AG04449 (cell line): ENCODE measurements at regions of chr19 and their contacts with region 1.

Region 1: DNA sequence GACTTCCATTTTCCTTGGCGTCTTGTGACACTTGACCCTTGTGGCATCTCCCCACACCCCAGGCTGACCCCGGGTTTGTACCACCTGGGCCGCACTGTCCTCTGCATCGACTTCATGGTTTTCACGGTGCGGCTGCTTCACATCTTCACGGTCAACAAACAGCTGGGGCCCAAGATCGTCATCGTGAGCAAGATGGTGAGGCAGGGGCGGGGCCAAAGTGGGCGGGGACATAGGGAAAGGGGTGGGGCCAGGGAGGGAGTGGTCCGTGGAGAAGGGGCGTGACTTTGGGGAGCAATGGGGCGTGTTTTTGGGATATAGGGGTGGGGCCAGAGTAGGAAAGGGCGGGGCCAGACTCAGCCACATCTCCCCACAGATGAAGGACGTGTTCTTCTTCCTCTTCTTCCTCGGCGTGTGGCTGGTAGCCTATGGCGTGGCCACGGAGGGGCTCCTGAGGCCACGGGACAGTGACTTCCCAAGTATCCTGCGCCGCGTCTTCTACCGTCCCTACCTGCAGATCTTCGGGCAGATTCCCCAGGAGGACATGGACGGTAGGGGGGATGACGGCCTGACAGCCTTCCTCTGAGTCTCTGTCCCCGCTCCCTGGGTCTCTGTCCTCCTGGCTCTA is 42.8 kb downstream of the TRPM4 start:
- DNase-seq: no peak
- H3K4me3 ChIP-seq: no peak overlapping the region
- CTCF ChIP-seq: no peak

Region 2: GRCh38 chr19:48993175-48994034 is 206.9 kb before region 1 on chr19 and contains the starts of genes GYS1 and RUVBL2:
- CTCF ChIA-PET with region 1: interaction called, 13 read pairs
- POLR2A ChIA-PET with region 1: no interaction called
- DNase-seq: peak; percentile 99
- H3K4me3 ChIP-seq: peak within 1 kb of the TSS; percentile 97
- CTCF ChIP-seq: peak; percentile 99

Region 3: GRCh38 chr19:49097455-49098288 is 102.7 kb before region 1 on chr19:
- CTCF ChIA-PET with region 1: interaction called, 95 read pairs
- POLR2A ChIA-PET with region 1: no interaction called
- DNase-seq: peak; percentile 17
- H3K4me3 ChIP-seq: no peak overlapping the region
- CTCF ChIP-seq: peak; percentile 95

Region 4: DNA sequence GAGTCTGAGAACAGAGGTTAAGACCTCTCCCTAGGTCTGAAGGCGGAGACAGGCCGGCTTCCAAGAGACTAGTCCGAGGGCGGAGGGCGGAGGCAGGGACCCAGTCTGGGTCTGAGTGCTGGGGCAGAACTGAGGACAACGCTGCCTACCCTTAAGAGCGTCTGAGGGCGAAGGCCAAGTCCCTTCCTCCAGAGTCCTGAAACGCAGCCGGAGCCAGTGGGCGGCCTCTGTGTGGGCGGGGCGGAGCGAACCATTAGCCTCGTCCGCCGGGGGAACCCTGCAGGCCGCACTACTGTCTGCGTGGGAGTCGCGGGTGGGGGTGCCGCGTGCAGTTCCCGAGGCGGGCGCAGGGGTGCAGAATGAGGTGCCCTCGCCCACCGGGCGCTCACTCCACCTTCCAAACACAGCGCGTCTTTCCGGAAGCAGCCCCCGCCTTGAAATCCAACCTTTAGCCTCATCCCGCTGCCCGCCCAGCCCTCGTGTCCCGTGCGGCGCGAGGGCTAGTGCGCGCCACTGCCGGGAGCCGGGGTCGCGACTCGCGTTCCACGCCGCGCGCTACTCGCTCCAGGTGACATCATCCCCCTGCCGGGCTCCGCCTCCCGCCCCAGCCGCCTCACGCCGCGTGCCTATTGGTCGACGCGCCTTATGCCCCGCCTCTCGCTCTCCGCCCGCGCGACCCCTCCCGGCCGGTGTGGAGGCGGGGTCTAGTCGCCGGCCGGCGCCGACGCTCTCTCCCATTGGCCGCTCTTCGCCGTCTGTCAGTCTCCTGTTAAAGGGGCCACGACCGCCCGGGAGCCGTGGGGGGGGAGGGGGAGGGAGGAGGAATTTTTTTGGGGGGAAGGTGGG is 81.6 kb before region 1 on chr19 and contains the start of gene C19orf73:
- CTCF ChIA-PET with region 1: interaction called, 33 read pairs
- POLR2A ChIA-PET with region 1: no interaction called
- DNase-seq: peak; percentile 33
- H3K4me3 ChIP-seq: peak within 1 kb of the TSS; percentile 77
- CTCF ChIP-seq: peak; percentile 6

Region 5: DNA sequence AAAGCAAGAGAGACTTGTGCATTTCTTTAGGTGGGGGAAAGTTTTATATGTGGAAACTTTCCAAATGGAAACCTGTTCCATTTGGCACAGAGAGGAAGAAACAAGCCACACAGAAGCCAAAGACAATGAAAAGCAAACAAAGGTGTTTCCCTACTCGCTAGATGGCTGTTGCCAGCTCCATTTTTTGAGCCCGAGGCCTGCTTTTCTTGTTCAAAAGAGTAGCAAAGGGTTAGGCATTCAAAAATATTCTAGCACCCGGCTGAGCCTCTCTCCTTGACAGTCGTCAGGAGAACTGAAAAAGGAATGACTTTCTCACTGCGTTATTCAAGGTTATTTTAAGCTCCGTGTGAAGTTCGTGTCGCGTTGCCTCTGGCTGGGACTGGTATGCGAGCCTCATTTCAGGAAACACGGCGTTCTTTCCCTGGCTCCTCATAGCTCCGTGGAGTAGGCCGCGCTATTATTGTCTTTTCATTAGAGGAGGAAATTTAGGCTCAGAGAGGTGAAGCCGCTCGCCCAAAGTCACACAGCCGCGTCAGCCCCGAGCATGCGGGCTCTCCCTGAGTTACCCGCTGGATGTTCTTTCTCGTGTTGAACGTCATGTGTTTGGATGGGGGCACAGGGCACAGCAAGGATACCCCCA is 35.1 kb before region 1 on chr19:
- CTCF ChIA-PET with region 1: interaction called, 29 read pairs
- POLR2A ChIA-PET with region 1: interaction called, 4 read pairs
- DNase-seq: no peak
- H3K4me3 ChIP-seq: no peak overlapping the region
- CTCF ChIP-seq: no peak

Region 6: DNA sequence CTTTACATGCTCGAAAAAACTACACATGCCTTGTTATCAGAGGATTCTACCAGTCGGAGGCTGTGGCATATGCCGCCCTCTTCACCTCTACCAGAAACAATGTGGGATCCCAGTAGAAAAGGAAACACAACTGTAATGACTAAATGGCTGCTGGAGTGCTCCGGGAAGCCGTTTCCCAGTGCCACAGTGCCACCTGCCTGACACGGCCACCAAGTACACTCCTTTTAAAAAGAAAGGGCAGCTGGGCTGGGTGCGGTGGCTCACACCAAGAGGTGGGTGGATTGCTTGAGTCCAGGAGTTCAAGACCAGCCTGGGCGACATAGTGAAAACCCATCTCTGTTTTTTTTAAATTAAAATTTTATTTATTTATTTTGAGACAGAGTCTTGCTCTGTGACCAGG is 24.5 kb after region 1 on chr19:
- CTCF ChIA-PET with region 1: interaction called, 19 read pairs
- POLR2A ChIA-PET with region 1: no interaction called
- DNase-seq: no peak
- H3K4me3 ChIP-seq: no peak overlapping the region
- CTCF ChIP-seq: peak; percentile 54

Region 7: GRCh38 chr19:49255674-49256073 is 55.3 kb after region 1 on chr19:
- CTCF ChIA-PET with region 1: no interaction called
- POLR2A ChIA-PET with region 1: no interaction called
- DNase-seq: no peak
- H3K4me3 ChIP-seq: no peak overlapping the region
- CTCF ChIP-seq: no peak